Naive thymus-derived CD4-positive, alpha-beta T cell (primary cell): ENCODE measurements at regions of chr2 and their contacts with region 1.

Region 1: DNA sequence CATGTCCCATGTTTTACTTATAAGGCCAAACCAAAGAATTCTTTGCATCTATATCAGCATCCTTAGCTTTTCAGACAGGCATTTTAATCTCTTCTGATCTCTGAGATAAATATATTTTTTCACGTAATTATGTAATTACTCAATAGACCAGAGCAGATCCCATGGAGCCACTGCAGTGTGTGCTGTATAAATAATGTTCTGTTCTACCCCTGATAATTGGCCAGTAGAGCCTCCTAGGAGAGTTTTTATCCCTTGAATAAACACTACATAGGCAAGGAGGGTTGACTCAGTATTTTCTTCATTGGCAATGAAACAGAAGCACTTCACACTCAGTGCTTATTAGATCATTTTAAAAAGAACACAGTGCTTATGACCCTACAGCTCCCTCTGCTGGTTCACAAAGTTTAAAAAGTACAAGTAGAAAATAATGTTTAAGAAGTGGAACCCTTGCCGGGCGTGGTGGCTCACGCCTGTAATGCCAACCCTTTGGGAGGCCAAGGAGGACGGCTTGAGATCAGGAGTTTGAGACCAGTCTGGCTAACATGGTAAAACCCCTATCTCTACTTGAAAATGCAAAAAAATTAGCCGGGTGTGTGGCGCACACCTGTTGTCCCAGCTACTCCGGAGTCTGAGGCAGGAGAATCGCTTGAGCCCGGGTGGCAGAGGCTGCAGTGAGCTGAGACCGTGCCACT is 91.9 kb downstream of the PPP1R1C start:
- DNase-seq: peak in 4 of 9 donors; percentile 4 to 31 (median 17)
- ATAC-seq: peak; percentile 52
- H3K4me3 ChIP-seq: no peak overlapping the region
- H3K4me3 Mint-ChIP-seq: no peak overlapping the region
- H3K27ac ChIP-seq: no peak overlapping the region
- H3K27ac Mint-ChIP-seq: no peak overlapping the region
- H3K4me1 ChIP-seq: no peaks in the 10 kb centered on the region
- H3K4me1 Mint-ChIP-seq: no peaks in the 10 kb centered on the region
- H3K27me3 ChIP-seq: no peaks in the 10 kb centered on the region
- H3K27me3 Mint-ChIP-seq: peaks cover 0 to 13% (median 5%) of the 10 kb centered on the region in 5 donors

Region 2: GRCh38 chr2:180125245-180125962 is 1952.2 kb before region 1 on chr2:
- CTCF ChIA-PET with region 1: no interaction called
- POLR2A ChIA-PET with region 1: no interaction called
- intact Hi-C with region 1: loop called (anchors 5 kb)
- DNase-seq: peak in 7 of 9 donors; percentile 18 to 43 (median 27)
- ATAC-seq: peak; percentile 86
- H3K4me3 ChIP-seq: no peak overlapping the region
- H3K4me3 Mint-ChIP-seq: peak overlapping the region in 4 of 10 donors; percentile 4 to 58 (median 24)
- H3K27ac ChIP-seq: no peak overlapping the region
- H3K27ac Mint-ChIP-seq: no peak overlapping the region
- H3K4me1 ChIP-seq: no peaks in the 10 kb centered on the region
- H3K4me1 Mint-ChIP-seq: peaks cover 0 to 6% (median 3%) of the 10 kb centered on the region in 7 donors
- H3K27me3 ChIP-seq: no peaks in the 10 kb centered on the region
- H3K27me3 Mint-ChIP-seq: peaks cover 0 to 26% (median 13%) of the 10 kb centered on the region in 5 donors

Region 3: GRCh38 chr2:181077128-181077709 is 1000.4 kb before region 1 on chr2:
- CTCF ChIA-PET with region 1: no interaction called
- POLR2A ChIA-PET with region 1: no interaction called
- intact Hi-C with region 1: loop called in 1 of 2 experiments (anchors 5 kb)
- DNase-seq: peak in 7 of 9 donors; percentile 49 to 76 (median 64)
- ATAC-seq: peak; percentile 90
- H3K4me3 ChIP-seq: no peak overlapping the region
- H3K4me3 Mint-ChIP-seq: no peak overlapping the region
- H3K27ac ChIP-seq: no peak overlapping the region
- H3K27ac Mint-ChIP-seq: no peak overlapping the region
- H3K4me1 ChIP-seq: no peaks in the 10 kb centered on the region
- H3K4me1 Mint-ChIP-seq: peaks cover 0 to 11% (median 0%) of the 10 kb centered on the region in 7 donors
- H3K27me3 ChIP-seq: no peaks in the 10 kb centered on the region
- H3K27me3 Mint-ChIP-seq: peaks cover 0 to 14% (median 0%) of the 10 kb centered on the region in 5 donors

Region 4: GRCh38 chr2:181742922-181743722 is 334.5 kb before region 1 on chr2:
- CTCF ChIA-PET with region 1: no interaction called
- POLR2A ChIA-PET with region 1: no interaction called
- intact Hi-C with region 1: loop called in 1 of 2 experiments (anchors 1 kb)
- DNase-seq: peak in 5 of 9 donors; percentile 17 to 35 (median 29)
- ATAC-seq: peak; percentile 49
- H3K4me3 ChIP-seq: no peak overlapping the region
- H3K4me3 Mint-ChIP-seq: no peak overlapping the region
- H3K27ac ChIP-seq: no peak overlapping the region
- H3K27ac Mint-ChIP-seq: no peak overlapping the region
- H3K4me1 ChIP-seq: no peaks in the 10 kb centered on the region
- H3K4me1 Mint-ChIP-seq: no peaks in the 10 kb centered on the region
- H3K27me3 ChIP-seq: no peaks in the 10 kb centered on the region
- H3K27me3 Mint-ChIP-seq: peaks cover 0 to 22% (median 3%) of the 10 kb centered on the region in 5 donors